CD8-positive, alpha-beta T cell (primary cell): ENCODE measurements at regions of chr16 and their contacts with region 1.

Region 1: DNA sequence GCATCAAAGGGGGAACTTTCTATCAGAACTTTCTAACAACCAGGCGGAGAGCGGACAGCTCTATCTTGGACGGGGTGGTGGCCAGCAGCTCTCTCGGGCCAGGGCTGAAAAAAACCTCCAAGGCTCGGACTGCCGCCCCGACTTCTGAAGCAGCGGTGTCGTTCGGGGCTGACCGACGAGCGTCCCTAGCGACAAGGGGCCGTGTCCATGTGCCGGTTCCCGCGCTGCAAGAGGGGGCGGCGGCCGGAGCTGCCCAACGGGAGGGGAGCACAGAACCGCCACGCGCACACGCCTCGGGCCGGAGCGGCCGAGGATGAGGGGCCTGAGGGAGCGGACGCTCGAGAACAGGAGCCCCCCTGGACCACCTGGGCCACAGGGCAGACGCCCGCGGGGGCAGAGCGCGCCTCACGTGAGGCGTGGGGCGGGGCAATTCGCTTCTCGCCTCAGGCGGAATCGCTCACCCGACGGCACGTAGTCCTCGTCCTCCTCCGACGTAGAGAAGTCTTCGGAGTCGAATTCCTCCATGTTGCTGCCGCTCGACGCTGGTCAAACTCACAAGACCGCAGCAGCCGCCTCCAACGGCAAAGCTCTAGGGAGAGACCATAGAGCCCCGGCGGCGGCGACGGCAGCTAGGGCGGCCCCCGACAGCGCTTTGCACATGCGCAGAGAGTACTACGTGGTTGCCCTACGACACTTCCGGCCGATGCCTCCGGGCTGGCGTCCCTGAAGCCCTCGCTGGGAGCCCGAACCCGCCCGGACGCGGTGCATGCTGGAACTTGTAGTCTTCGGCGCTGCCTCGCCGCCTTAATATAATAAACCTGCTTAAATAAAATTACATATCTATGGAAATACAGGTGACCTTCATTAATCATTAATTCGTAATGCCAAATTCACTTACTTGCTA is at the start of gene CFDP1:
- DNase-seq: peak; percentile 90 to 98 (median 96)
- ATAC-seq: peak; percentile 81
- H3K4me3 ChIP-seq: peak within 1 kb of the TSS; percentile 87 to 90
- H3K4me3 Mint-ChIP-seq: peak within 1 kb of the TSS; percentile 87
- H3K27ac ChIP-seq: peak within 1 kb of the TSS; percentile 95 to 98
- H3K27ac Mint-ChIP-seq: peak within 1 kb of the TSS; percentile 96
- H3K4me1 ChIP-seq: peaks cover 6% of the 10 kb centered on the region
- H3K4me1 Mint-ChIP-seq: peaks cover 38% of the 10 kb centered on the region
- H3K27me3 ChIP-seq: no peaks in the 10 kb centered on the region
- H3K27me3 Mint-ChIP-seq: no peaks in the 10 kb centered on the region
- CTCF ChIP-seq: no peak
- total RNA-seq, gene CFDP1: 18.6 to 20.3 TPM

Region 2: GRCh38 chr16:74372953-74373846 is 1059.9 kb before region 1 on chr16:
- CTCF ChIA-PET with region 1: no interaction called
- POLR2A ChIA-PET with region 1: no interaction called
- intact Hi-C with region 1: loop called in 1 of 2 experiments (anchors 5 kb)
- DNase-seq: no peak
- ATAC-seq: no peak
- H3K4me3 ChIP-seq: no peak overlapping the region
- H3K4me3 Mint-ChIP-seq: no peak overlapping the region
- H3K27ac ChIP-seq: no peak overlapping the region
- H3K27ac Mint-ChIP-seq: no peak overlapping the region
- H3K4me1 ChIP-seq: no peaks in the 10 kb centered on the region
- H3K4me1 Mint-ChIP-seq: peaks cover 2% of the 10 kb centered on the region
- H3K27me3 ChIP-seq: no peaks in the 10 kb centered on the region
- H3K27me3 Mint-ChIP-seq: no peaks in the 10 kb centered on the region
- CTCF ChIP-seq: no peak

Region 3: DNA sequence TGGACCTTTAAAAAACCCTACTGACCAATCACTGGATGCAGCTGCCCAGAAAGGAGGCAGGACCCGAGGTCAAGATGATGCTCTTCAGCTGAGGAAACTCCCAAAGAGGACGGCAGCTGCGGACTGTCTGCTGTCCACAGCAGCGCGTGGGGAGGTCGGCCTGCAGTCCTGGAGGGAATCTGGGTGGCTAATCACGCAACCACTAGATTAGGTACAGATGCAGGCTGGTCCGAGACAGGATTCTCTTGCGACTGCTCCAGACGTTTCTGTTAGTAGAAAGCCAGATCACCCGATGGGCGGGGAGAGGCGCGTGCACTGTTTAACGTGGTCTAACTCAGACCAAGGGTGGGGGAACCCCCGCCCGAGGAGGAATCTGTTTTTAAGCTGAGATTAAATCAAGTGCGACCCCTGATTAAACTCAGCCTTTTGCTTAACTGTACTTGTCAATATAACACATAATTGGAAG is 234.9 kb before region 1 on chr16:
- CTCF ChIA-PET with region 1: interaction called, 4 read pairs
- POLR2A ChIA-PET with region 1: no interaction called
- intact Hi-C with region 1: loop called in 1 of 2 experiments (anchors 1 kb)
- DNase-seq: no peak
- ATAC-seq: no peak
- H3K4me3 ChIP-seq: no peak overlapping the region
- H3K4me3 Mint-ChIP-seq: no peak overlapping the region
- H3K27ac ChIP-seq: no peak overlapping the region
- H3K27ac Mint-ChIP-seq: no peak overlapping the region
- H3K4me1 ChIP-seq: peaks cover 14% of the 10 kb centered on the region
- H3K4me1 Mint-ChIP-seq: peaks cover 18% of the 10 kb centered on the region
- H3K27me3 ChIP-seq: no peaks in the 10 kb centered on the region
- H3K27me3 Mint-ChIP-seq: peaks cover 25% of the 10 kb centered on the region
- CTCF ChIP-seq: no peak

Region 4: DNA sequence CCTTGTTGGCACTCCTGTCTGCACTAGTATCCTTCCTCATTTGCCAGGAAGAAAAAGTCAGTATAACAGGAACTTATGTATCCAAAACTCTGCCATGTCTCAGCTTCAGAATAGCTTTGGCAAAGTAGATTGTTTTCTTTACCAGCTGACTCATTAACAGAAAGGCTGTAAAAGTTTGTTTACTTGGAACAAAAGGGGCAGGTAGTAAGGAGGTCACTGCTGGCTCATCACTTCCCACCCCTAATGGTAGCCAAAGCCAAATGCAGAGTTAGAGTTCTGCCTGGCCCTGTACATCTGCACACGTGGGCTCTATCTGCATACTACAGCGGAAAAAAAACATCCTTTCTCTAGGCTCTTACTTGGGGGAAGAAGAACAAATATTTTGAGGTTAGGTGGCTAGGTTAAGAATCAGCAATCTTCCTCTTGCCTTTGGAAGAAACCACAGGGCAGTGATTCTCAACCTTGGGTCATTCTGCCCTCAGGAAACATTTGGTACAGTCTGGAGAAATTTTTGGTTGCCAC is 90.7 kb before region 1 on chr16:
- CTCF ChIA-PET with region 1: no interaction called
- POLR2A ChIA-PET with region 1: no interaction called
- intact Hi-C with region 1: no loop called
- DNase-seq: no peak
- ATAC-seq: no peak
- H3K4me3 ChIP-seq: no peak overlapping the region
- H3K4me3 Mint-ChIP-seq: no peak overlapping the region
- H3K27ac ChIP-seq: no peak overlapping the region
- H3K27ac Mint-ChIP-seq: no peak overlapping the region
- H3K4me1 ChIP-seq: no peaks in the 10 kb centered on the region
- H3K4me1 Mint-ChIP-seq: no peaks in the 10 kb centered on the region
- H3K27me3 ChIP-seq: no peaks in the 10 kb centered on the region
- H3K27me3 Mint-ChIP-seq: no peaks in the 10 kb centered on the region
- CTCF ChIP-seq: no peak

Region 5: DNA sequence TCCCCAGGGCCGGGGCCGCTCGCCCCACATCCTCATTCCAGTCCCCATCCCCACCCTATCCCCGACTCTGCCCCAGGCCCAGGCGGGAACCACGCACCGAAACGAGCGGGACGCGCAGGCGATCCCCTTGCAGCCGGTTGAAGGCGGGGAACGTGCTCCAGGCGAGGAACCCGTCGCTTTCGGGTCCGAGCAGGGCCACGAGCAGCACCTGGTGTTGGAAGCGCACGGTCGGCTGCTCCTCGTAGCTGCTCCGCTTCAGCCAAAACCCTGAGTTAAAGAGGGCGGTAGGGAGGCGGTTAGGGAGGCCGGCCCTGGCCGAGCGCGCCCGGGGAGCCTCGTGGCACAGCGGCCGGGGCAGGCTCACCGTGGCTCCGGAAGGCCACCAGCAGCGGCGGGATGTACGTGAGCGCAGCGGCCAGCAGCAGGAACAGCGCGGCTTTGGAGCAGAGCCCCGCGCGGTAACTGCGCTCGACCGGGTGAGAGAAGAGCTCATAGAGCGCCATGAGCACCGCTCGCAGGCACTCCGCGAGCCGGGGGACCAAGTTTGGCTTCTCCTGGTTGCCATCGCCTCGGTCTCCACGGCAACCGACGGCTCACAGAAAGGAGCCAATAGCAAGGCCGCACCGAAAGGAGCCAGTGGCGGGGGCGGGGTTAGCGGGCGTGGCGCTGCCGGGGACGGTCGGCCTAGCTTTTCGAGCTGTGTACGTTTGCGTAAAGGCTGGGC is 122.8 kb after region 1 on chr16 and contains the start of gene TMEM231:
- CTCF ChIA-PET with region 1: no interaction called
- POLR2A ChIA-PET with region 1: no interaction called
- intact Hi-C with region 1: loop called (anchors 1 to 2 kb)
- DNase-seq: peak; percentile 95 to 98 (median 97)
- ATAC-seq: peak; percentile 96
- H3K4me3 ChIP-seq: peak within 1 kb of the TSS; percentile 61 to 69
- H3K4me3 Mint-ChIP-seq: peak within 1 kb of the TSS; percentile 86
- H3K27ac ChIP-seq: peak within 1 kb of the TSS; percentile 65 to 70
- H3K27ac Mint-ChIP-seq: peak within 1 kb of the TSS; percentile 88
- H3K4me1 ChIP-seq: peaks cover 12% of the 10 kb centered on the region
- H3K4me1 Mint-ChIP-seq: peaks cover 14% of the 10 kb centered on the region
- H3K27me3 ChIP-seq: no peaks in the 10 kb centered on the region
- H3K27me3 Mint-ChIP-seq: peaks cover 9% of the 10 kb centered on the region
- CTCF ChIP-seq: no peak
- total RNA-seq, gene TMEM231: 2.1 to 2.8 TPM

Region 6: GRCh38 chr16:75622761-75623605 is 189.9 kb after region 1 on chr16 and contains the start of gene ADAT1:
- CTCF ChIA-PET with region 1: no interaction called
- POLR2A ChIA-PET with region 1: interaction called, 14 read pairs
- intact Hi-C with region 1: loop called (anchors 1 kb)
- DNase-seq: peak; percentile 94 to 100 (median 98)
- ATAC-seq: peak; percentile 85
- H3K4me3 ChIP-seq: peak within 1 kb of the TSS; percentile 90 to 97
- H3K4me3 Mint-ChIP-seq: peak within 1 kb of the TSS; percentile 98
- H3K27ac ChIP-seq: peak within 1 kb of the TSS; percentile 89 to 98
- H3K27ac Mint-ChIP-seq: peak within 1 kb of the TSS; percentile 98
- H3K4me1 ChIP-seq: peaks cover 36% of the 10 kb centered on the region
- H3K4me1 Mint-ChIP-seq: peaks cover 58% of the 10 kb centered on the region
- H3K27me3 ChIP-seq: no peaks in the 10 kb centered on the region
- H3K27me3 Mint-ChIP-seq: no peaks in the 10 kb centered on the region
- CTCF ChIP-seq: no peak
- total RNA-seq, gene ADAT1: 44.4 to 47.6 TPM